Left cardiac atrium (tissue), 4 donors: ENCODE measurements at regions of chr1 and their contacts with region 1.

Region 1: GRCh38 chr1:107840725-107841124 is 124.3 kb downstream of the VAV3 start:
- DNase-seq: no peak
- ATAC-seq: no peak

Region 2: GRCh38 chr1:107795994-107796393 is 44.7 kb before region 1 on chr1:
- intact Hi-C with region 1: loop called in 1 of 2 experiments (anchors 10 kb)
- DNase-seq: no peak
- ATAC-seq: no peak